ENCODE measurements at regions of chr11 and their contacts with region 1.

Region 1: DNA sequence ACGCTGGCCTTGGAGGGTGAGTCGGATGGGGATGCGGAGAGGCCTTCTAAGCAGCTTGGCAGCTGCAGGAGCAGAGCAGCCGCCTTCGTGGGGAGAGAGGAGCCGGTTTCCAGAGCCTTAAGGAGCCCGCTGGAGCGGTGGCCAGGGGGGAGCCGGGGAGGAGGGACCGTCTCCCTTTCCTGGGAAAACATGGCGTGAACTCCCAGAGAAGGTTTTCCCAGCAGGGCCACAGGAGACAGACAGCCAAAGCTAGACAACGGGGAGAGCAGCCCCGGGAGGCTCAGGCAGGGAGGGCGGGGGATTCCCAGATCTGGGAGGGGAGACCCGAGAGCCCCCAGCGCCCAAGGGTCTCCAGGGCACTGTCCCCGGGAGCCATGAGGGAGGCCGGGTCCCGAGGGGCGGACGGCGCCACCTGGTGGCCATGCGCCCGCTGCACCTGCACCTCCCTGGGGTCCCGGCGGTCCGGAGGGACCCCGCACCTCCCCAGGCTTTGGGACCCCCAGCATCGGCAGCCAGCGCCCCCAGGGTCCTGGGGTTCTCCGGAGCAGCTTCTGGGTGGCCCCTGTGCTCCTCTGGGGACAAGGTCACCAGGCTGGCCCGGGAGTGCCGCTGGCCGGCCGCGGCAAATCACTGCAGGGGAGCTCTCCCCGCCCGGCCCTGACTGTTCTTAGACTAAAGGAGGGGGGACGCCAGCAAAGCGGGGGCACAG is 2.4 kb upstream of the SYT8 start:
- DNase-seq: peak; percentile 68
- H3K4me3 ChIP-seq: peak overlapping the region; percentile 10
- H3K27ac ChIP-seq: no peak overlapping the region
- H3K4me1 ChIP-seq: peaks cover 28% of the 10 kb centered on the region
- H3K27me3 ChIP-seq: no peaks in the 10 kb centered on the region
- CTCF ChIP-seq: peak; percentile 98

Region 2: GRCh38 chr11:1694064-1694845 is 138.1 kb before region 1 on chr11:
- intact Hi-C with region 1: loop called (anchors 1 kb)
- DNase-seq: peak; percentile 90
- H3K4me3 ChIP-seq: peak overlapping the region; percentile 11
- H3K27ac ChIP-seq: no peak overlapping the region
- H3K4me1 ChIP-seq: peaks cover 5% of the 10 kb centered on the region
- H3K27me3 ChIP-seq: peaks cover 4% of the 10 kb centered on the region
- CTCF ChIP-seq: peak; percentile 97

Measured in colonic mucosa (tissue), 4 donors.